ENCODE measurements at regions of chr18 and their contacts with region 1.

Region 1: GRCh38 chr18:25230658-25231326 is 121.2 kb downstream of the ZNF521 start:
- DNase-seq: peak; percentile 85 to 91 (median 87)
- ATAC-seq: peak; percentile 91 to 92
- H3K4me3 ChIP-seq: no peak overlapping the region
- H3K27ac ChIP-seq: peak overlapping the region; percentile 85
- H3K4me1 ChIP-seq: peaks cover 9% of the 10 kb centered on the region
- H3K27me3 ChIP-seq: no peaks in the 10 kb centered on the region

Region 2: DNA sequence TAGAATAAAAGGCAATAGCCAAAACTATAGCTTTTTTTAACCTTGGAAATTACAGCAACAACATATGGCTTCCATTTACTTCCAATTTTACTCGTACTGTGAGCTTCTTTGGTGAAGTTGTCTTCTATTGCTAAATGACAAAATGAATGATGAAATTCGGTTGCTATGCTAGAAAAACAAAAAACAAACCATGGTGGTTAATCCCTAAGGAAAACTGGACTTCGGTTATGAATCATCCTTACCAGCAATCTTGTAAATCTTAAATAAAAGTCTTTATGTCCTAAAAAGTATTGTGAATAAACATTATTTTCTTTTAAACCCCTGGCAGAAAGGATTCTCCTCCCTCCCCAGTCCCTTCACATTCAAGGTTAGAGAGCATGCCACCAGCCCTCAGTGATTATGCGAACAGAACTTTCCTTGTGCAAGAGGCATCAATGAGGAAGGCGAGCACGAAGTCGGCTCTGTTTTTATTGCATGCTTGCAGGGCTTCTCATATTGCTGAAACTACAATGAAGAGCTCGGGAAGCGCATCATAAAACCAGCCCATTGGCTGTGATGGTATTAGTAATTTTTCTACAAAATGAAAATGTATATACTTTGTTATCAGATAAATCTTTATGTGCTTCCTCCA is 58.3 kb after region 1 on chr18:
- intact Hi-C with region 1: loop called in 1 of 4 experiments (anchors 10 kb)
- DNase-seq: peak in 1 of 3 donors; percentile 54
- ATAC-seq: peak in 1 of 2 donors; percentile 10
- H3K4me3 ChIP-seq: no peak overlapping the region
- H3K27ac ChIP-seq: peak overlapping the region; percentile 36
- H3K4me1 ChIP-seq: peaks cover 2% of the 10 kb centered on the region
- H3K27me3 ChIP-seq: no peaks in the 10 kb centered on the region

Region 3: DNA sequence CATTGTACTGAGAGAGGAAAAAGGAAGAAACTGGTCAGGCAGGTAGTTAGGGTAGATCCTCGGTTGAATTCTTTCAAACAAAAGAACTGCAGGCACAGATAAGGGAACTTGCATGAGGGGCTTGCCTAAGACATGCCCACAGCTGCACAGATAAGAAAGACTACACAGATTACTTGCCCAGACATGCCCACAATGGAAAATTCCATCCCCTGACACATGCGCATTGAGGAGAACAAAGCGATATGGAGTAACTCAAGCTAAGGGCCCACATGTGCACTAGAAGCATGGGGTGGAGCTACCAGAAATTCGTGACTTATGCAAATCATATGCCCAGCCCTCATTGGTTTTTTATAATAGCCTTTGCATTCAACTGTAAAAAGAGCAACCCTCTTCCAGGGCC is 302.4 kb after region 1 on chr18:
- intact Hi-C with region 1: no loop called
- DNase-seq: no peak
- ATAC-seq: no peak
- H3K4me3 ChIP-seq: no peak overlapping the region
- H3K27ac ChIP-seq: no peak overlapping the region
- H3K4me1 ChIP-seq: no peaks in the 10 kb centered on the region
- H3K27me3 ChIP-seq: no peaks in the 10 kb centered on the region